BJ (cell line): ENCODE measurements at regions of chr15 and their contacts with region 1.

Region 1: DNA sequence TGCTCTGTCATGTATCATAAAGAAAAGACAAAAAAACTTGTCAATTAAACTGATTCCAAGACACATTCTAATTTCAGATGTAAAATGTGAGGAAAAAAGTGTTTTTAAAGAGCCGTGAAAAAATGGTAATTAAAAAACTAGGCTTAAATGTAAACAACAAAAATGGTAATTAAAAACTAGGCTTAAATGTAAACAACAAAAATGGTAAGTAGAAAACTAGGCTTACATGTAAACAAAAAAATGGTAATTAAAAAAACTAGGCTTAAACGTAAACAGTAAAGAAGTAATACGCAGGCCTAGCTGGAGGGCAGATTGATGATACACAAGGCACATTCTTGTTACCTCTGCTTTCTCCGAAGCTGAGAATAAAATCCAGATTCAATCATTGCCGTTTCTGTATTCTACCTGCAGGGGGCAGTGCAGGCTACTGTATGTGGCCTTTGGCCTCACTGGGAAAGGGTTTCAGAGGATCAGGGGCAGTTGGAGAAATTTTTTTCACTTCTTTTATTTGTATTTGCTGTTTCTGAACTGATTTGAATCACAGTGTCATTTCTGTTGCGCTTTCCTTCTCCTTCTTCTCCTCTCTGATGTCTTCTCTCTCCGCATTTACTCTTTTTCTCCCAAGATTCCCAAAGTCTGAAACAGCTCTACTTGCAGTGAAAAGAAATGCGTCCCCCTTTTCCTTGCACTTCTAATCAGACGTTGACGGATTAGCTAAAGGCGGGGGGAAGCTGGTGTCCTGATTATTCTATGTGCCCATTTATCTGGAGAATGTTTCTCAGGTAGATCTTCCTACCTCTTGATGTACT is 67.2 kb upstream of the MCTP2 start:
- DNase-seq: no peak
- H3K4me3 ChIP-seq: no peak overlapping the region
- H3K27me3 ChIP-seq: no peaks in the 10 kb centered on the region
- CTCF ChIP-seq: peak; percentile 76

Region 2: GRCh38 chr15:93771196-93772030 is 392.8 kb before region 1 on chr15:
- CTCF ChIA-PET with region 1: no interaction called
- POLR2A ChIA-PET with region 1: no interaction called
- DNase-seq: no peak
- H3K4me3 ChIP-seq: no peak overlapping the region
- H3K27me3 ChIP-seq: no peaks in the 10 kb centered on the region
- CTCF ChIP-seq: no peak

Region 3: DNA sequence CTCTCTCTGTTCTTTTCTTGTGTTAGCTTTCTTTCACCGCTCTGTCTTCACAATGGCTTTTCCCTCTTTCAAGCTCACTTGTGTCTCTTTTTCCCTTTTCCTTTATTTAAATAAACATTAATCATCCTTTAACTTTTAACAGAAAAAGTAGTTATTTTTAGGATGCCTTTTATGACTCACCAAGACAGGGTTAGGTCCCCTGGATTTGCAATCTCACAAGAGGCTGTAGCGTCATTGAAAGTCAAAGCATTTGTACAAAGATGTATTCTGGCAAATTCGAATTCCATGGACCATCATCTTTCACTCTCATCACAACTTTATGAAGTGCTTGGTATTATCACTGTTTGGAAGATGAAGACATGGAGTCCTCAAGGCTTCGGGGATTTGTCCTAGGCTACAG is 32.3 kb after region 1 on chr15:
- CTCF ChIA-PET with region 1: no interaction called
- POLR2A ChIA-PET with region 1: no interaction called
- DNase-seq: no peak
- H3K4me3 ChIP-seq: no peak overlapping the region
- H3K27me3 ChIP-seq: no peaks in the 10 kb centered on the region
- CTCF ChIP-seq: no peak

Region 4: GRCh38 chr15:94306700-94307650 is 142.8 kb after region 1 on chr15:
- CTCF ChIA-PET with region 1: interaction called, 13 read pairs
- POLR2A ChIA-PET with region 1: no interaction called
- DNase-seq: no peak
- H3K4me3 ChIP-seq: no peak overlapping the region
- H3K27me3 ChIP-seq: no peaks in the 10 kb centered on the region
- CTCF ChIP-seq: no peak

Region 5: GRCh38 chr15:94335616-94336015 is 171.4 kb after region 1 on chr15:
- CTCF ChIA-PET with region 1: interaction called, 29 read pairs
- POLR2A ChIA-PET with region 1: no interaction called
- DNase-seq: no peak
- H3K4me3 ChIP-seq: no peak overlapping the region
- H3K27me3 ChIP-seq: no peaks in the 10 kb centered on the region
- CTCF ChIP-seq: no peak